Mucosa of descending colon (tissue), 3 donors: ENCODE measurements at regions of chr1 and their contacts with region 1.

Region 1: GRCh38 chr1:151198255-151199127 is at the start of gene PIP5K1A:
- DNase-seq: peak; percentile 98 to 99 (median 98)
- ATAC-seq: peak; percentile 86
- H3K4me3 ChIP-seq: peak within 1 kb of the TSS; percentile 58
- H3K4me1 ChIP-seq: peaks cover 27% of the 10 kb centered on the region
- CTCF ChIP-seq: peak; percentile 16
- total RNA-seq, gene PIP5K1A: 38.4 to 47.5 (median 39.2) TPM

Region 2: DNA sequence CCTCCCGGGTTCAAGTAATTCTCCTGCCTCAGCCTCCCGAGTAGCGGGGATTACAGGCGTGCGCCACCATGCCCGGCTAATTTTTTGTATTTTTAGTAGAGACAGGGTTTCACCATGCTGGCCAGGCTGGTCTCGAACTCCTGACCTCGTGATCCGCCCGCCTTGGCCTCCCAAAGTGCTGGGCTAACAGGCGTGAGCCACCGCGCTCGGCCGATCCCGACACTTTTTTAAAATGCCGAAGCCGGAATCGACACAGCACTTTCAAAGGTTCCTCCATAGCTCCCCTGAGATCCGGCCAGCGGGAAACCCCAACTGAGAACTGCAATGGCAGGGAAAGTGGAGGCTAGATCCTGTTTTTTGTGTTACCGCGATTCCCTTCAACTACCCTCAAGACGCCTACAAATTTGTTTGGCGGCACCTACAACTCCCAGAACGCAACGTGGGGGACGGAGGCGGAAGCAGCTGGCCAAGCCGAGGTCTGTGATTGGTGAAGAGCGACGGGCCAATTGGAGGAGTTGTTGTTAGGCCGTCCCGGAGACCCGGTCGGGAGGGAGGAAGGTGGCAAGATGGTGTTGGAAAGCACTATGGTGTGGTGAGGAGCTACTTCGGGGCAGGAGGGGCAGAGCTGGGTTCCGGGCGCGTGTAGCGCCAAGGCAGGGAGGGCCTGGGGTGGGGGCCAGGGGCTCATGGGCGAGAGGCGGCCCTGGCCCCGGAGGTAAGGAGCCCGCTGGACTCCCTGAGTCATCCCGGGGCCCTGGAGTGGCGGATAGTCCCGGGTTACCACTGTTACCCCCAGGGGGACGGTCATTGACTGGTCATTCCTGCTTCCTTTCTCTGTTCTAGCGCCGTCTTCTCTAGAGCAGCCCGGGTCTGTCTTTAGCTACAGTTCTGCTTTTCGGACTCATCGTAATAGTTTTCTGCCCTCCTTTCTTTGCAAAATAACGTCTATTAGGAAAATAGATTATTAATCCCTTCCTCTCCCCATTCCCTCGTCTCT is 56.0 kb after region 1 on chr1 and contains the start of gene PSMD4:
- intact Hi-C with region 1: loop called in 1 of 2 experiments (anchors 5 kb)
- DNase-seq: peak; percentile 95 to 96 (median 96)
- ATAC-seq: peak; percentile 100
- H3K4me3 ChIP-seq: peak within 1 kb of the TSS; percentile 93
- H3K4me1 ChIP-seq: peaks cover 17% of the 10 kb centered on the region
- CTCF ChIP-seq: no peak
- total RNA-seq, gene PSMD4: 90.2 to 150 (median 95.1) TPM

Region 3: GRCh38 chr1:151292207-151293030 is 93.9 kb after region 1 on chr1:
- intact Hi-C with region 1: no loop called
- DNase-seq: peak in 1 of 3 donors; percentile 46
- ATAC-seq: no peak
- H3K4me3 ChIP-seq: no peak overlapping the region
- H3K4me1 ChIP-seq: no peaks in the 10 kb centered on the region
- CTCF ChIP-seq: no peak